Activated naive CD4-positive, alpha-beta T cell treated with anti-CD3 and anti-CD28 coated beads for 36 hours (primary cell): ENCODE measurements at regions of chr2 and their contacts with region 1.

Region 1: DNA sequence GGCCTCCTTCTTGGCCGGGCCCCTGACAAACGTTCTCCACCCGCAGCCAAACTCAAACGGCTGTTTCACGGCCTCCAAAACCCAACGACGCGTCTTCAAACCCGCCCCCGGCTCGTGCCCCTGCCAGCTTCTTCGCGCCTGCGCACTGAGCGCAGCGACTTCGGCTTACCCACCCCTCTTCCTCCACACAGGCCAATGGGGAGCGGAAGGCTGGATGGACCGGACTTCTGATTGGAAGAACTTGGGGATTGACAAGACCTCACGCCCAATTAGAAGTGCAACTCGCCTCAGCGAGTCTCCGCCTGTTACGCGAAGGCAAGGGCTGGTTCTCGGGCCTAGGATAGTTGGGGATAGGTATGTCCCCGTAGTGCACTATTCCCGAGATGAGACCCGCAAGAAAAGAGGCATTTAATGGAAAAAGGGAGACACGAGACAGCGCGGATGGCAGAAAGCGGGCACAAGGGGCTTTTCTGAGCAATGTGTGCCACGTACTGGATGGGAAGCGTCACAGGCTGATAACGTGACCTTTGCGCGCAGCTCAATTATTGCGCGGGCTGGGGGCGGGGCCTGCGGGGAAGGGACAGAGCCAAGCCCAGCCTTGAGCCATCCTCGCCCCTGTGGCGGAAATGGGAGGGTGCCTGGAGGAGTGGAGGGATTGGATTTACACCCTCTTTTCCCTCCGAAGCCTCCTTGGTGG is at the start of gene LAPTM4A:
- DNase-seq: peak; percentile 98
- H3K4me3 Mint-ChIP-seq: no peak within 1 kb of the TSS
- H3K27ac Mint-ChIP-seq: no peak within 1 kb of the TSS
- H3K4me1 Mint-ChIP-seq: peaks cover 25% of the 10 kb centered on the region
- H3K27me3 Mint-ChIP-seq: peaks cover 8% of the 10 kb centered on the region
- total RNA-seq, gene LAPTM4A: 23.4 to 24.4 TPM

Region 2: DNA sequence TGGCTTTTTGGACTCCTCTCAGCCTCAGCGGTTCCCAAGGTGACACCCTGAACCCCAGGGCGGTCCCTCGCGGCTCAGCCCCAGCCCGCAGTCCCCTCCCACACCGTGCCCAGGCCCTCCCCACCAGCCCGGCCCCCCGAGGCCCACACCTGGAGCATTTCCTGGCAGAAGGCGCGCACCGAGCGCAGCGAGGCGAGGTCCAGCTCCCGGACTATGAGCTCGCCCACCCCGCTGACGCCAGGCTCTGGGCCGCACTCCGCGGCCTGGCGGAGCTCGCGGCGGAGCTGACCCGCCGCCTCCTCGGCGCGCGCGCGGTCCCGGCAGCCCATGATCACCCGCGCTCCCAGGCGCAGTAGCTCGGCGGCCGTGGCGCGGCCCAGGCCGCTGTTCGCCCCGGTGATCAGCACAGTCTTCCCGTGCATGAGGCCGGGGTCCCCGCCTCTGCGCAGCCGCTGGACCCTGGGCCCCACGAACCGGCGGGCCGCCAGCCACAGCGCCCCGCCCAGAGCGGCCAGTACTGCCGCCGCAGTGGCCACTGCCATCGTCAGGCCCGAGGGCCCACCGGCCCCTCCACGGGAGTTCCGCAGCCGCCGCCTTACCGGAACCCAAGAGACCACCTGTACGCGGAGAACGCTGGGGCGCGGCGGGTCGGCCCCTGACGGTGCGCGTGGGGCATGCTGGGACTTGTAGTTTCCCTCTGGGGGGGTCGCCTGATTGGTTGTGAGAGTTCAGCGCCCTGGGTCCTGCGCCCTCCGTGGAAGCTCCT is 1491.5 kb before region 1 on chr2 and contains the start of gene RDH14:
- CTCF ChIA-PET with region 1: no interaction called
- intact Hi-C with region 1: loop called (anchors 1 kb)
- DNase-seq: peak; percentile 94
- H3K4me3 Mint-ChIP-seq: peak within 1 kb of the TSS; percentile 84
- H3K27ac Mint-ChIP-seq: peak within 1 kb of the TSS; percentile 89
- H3K4me1 Mint-ChIP-seq: peaks cover 35% of the 10 kb centered on the region
- H3K27me3 Mint-ChIP-seq: no peaks in the 10 kb centered on the region
- total RNA-seq, gene RDH14: 11.4 to 11.6 TPM

Region 3: GRCh38 chr2:19901442-19902215 is 150.1 kb before region 1 on chr2 and contains the start of gene TTC32:
- CTCF ChIA-PET with region 1: no interaction called
- intact Hi-C with region 1: loop called (anchors 1 kb)
- DNase-seq: peak; percentile 96
- H3K4me3 Mint-ChIP-seq: peak within 1 kb of the TSS; percentile 81
- H3K27ac Mint-ChIP-seq: peak within 1 kb of the TSS; percentile 99
- H3K4me1 Mint-ChIP-seq: peaks cover 42% of the 10 kb centered on the region
- H3K27me3 Mint-ChIP-seq: peaks cover 10% of the 10 kb centered on the region
- total RNA-seq, gene TTC32: 17.0 to 19.4 TPM

Region 4: GRCh38 chr2:20015472-20016083 is 36.1 kb before region 1 on chr2:
- CTCF ChIA-PET with region 1: interaction called, 8 read pairs
- intact Hi-C with region 1: loop called (anchors 1 kb)
- DNase-seq: no peak
- H3K4me3 Mint-ChIP-seq: no peak overlapping the region
- H3K27ac Mint-ChIP-seq: no peak overlapping the region
- H3K4me1 Mint-ChIP-seq: peaks cover 8% of the 10 kb centered on the region
- H3K27me3 Mint-ChIP-seq: peaks cover 28% of the 10 kb centered on the region

Region 5: GRCh38 chr2:20365249-20365817 is 313.7 kb after region 1 on chr2:
- CTCF ChIA-PET with region 1: no interaction called
- intact Hi-C with region 1: loop called (anchors 1 kb)
- DNase-seq: peak; percentile 84
- H3K4me3 Mint-ChIP-seq: no peak overlapping the region
- H3K27ac Mint-ChIP-seq: peak overlapping the region; percentile 54
- H3K4me1 Mint-ChIP-seq: peaks cover 25% of the 10 kb centered on the region
- H3K27me3 Mint-ChIP-seq: peaks cover 11% of the 10 kb centered on the region

Region 6: GRCh38 chr2:20822535-20823490 is 771.1 kb after region 1 on chr2 and contains the start of gene LDAH:
- CTCF ChIA-PET with region 1: no interaction called
- intact Hi-C with region 1: loop called (anchors 5 kb)
- DNase-seq: peak; percentile 92
- H3K4me3 Mint-ChIP-seq: peak within 1 kb of the TSS; percentile 96
- H3K27ac Mint-ChIP-seq: peak within 1 kb of the TSS; percentile 97
- H3K4me1 Mint-ChIP-seq: peaks cover 26% of the 10 kb centered on the region
- H3K27me3 Mint-ChIP-seq: no peaks in the 10 kb centered on the region
- total RNA-seq, gene LDAH: 31.1 to 37.6 TPM

Region 7: GRCh38 chr2:21395366-21395765 is 1343.7 kb after region 1 on chr2:
- CTCF ChIA-PET with region 1: no interaction called
- intact Hi-C with region 1: no loop called
- DNase-seq: no peak
- H3K4me3 Mint-ChIP-seq: no peak overlapping the region
- H3K27ac Mint-ChIP-seq: no peak overlapping the region
- H3K4me1 Mint-ChIP-seq: no peaks in the 10 kb centered on the region
- H3K27me3 Mint-ChIP-seq: peaks cover 2% of the 10 kb centered on the region